Common myeloid progenitor, CD34-positive (primary cell): ENCODE measurements at regions of chr10 and their contacts with region 1.

Region 1: DNA sequence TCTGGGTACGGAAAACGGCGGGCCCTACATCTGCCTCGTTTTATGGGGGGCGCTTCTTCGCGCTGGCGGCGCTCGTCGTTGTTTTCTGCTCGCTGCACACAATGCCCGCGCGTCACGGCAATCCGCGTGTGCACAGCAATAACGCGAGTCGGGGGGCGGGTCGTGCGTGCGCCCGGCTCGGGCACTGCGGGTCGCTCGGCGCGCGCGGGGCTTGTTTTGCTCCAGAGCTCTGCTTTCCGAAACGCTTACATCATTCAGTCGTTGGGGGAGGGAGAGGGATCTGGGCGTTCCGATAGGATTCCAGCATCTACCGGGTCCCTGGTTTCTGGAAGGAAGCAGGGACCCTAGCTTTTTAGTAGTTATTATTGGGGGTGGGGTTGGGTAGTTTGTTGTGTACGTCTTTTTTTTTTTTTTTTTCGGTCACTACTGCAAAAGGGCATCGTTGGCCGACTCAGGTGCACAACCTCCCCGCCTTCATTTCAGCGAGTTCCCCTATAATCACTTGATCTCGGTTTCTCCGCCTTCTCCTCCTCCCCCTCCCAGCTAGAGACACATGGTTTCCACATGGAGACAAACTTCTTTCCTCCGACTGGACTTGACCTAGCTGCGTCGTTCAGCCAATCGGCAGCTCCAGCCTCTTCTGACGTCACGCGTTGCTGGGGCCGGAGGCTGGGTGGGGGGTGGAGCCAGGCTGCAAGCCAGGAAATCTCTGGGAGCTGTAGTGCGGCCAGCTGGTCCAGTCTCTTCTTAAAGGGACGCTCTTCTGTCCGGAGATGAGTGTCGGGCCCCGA is 3.5 kb downstream of the MXI1 start:
- DNase-seq: peak; percentile 89 to 92 (median 90)
- H3K4me3 ChIP-seq: peak overlapping the region; percentile 37 to 84 (median 68)
- H3K27ac ChIP-seq: peak overlapping the region in 1 of 2 experiments; percentile 66
- H3K4me1 ChIP-seq: peaks cover 26 to 82% (median 69%) of the 10 kb centered on the region in 4 experiments
- H3K27me3 ChIP-seq: peaks cover 3 to 56% (median 25%) of the 10 kb centered on the region in 5 experiments

Region 2: GRCh38 chr10:110225756-110226542 is 15.1 kb after region 1 on chr10:
- CTCF ChIA-PET with region 1: interaction called, 119 read pairs
- POLR2A ChIA-PET with region 1: interaction called, 3 read pairs
- DNase-seq: peak; percentile 90 to 93 (median 93)
- H3K4me3 ChIP-seq: peak overlapping the region; percentile 71 to 95 (median 82)
- H3K27ac ChIP-seq: peak overlapping the region in 1 of 2 experiments; percentile 43
- H3K4me1 ChIP-seq: peaks cover 17 to 34% (median 23%) of the 10 kb centered on the region in 4 experiments
- H3K27me3 ChIP-seq: peaks cover 0 to 4% (median 0%) of the 10 kb centered on the region in 5 experiments